Cardiac septum (tissue), 1 donor: ENCODE measurements at regions of chr10 and their contacts with region 1.

Region 1: GRCh38 chr10:86585037-86585725 is 63.6 kb upstream of the WAPL start:
- DNase-seq: no peak

Region 2: DNA sequence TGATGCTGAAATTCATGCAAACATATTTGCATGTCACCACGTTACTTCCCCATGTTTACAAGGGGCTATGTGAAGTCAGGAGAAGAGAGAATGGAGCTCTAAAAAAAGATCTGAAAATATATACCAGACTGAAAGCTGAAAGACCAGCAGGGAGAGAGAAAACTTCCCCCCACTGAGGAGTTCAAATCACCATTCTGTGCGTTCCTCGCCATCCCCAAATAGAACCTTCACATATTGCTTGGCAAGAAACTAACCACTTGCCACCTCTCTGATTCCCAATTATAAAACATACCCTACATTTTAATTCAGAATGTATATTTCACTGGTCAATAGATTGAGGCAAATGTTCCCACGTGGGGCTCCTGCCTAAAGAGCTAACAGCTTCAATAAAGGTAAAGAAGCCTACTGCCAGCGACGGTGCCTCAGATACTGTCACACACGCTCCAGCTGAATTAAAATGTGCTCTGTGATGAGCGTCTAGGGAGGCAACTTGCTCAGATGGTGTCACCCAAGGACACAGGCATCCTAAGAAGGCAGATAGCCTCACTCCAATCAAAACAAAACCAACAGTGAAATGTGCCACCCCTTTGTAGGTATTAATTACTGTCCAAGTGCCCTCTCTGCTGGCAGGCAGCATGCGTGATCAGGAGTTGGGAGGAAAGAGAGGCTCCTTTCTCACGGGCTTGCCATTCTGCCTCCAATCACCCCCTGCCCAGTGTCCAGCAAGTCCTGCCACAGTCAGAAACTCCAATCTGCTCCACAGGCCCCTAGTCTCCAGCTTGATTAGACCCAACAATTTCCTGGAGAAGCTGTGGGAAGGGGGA is 516.7 kb before region 1 on chr10:
- intact Hi-C with region 1: no loop called
- DNase-seq: peak; percentile 49

Region 3: DNA sequence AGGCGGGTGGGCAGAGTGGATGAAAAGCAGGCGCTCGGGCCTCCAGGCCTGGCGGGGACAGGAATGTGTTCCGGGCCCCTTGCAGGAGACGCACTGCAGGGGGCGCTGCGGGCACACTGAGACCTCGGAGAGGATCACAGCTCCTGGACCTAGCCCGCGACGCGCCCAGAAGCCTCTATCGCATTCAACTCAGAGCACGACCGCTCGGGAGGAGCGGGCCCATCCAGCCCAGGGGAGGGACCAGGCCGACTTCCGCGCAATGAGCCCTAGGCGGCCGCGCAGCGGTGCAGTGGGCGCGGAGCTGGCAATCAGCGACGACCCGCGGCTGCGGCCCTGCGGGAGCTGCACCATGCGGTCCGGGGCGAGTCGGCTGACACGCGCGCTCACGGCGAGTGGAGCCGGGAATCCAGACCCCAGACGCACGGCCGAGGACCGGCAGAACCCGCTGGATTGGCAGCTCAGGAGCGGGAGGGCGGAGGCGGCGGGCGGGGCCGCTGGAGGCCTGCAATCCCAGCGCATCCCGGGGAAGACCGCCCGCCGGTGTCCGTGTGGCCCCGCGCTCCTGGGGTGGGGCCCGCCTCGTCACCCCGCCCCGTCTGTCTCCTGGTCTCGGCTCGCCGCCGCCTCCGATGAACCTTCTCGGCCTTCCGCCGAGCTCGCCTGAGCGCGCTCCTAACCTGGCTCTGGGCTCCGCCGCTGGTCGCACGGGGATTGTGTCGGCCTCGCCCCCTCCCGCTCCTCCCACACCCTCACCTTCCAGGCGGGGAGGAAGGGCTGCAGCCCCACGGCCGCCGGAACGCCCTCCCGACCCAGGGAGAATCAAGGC is 185.1 kb before region 1 on chr10:
- intact Hi-C with region 1: loop called (anchors 1 kb)
- DNase-seq: peak; percentile 96

Region 4: GRCh38 chr10:86521678-86522509 is 63.3 kb before region 1 on chr10 and contains the start of gene WAPL:
- intact Hi-C with region 1: loop called (anchors 5 kb)
- DNase-seq: peak; percentile 98
- total RNA-seq, gene WAPL: 24.0 TPM